ENCODE measurements at regions of chr22 and their contacts with region 1.

Region 1: DNA sequence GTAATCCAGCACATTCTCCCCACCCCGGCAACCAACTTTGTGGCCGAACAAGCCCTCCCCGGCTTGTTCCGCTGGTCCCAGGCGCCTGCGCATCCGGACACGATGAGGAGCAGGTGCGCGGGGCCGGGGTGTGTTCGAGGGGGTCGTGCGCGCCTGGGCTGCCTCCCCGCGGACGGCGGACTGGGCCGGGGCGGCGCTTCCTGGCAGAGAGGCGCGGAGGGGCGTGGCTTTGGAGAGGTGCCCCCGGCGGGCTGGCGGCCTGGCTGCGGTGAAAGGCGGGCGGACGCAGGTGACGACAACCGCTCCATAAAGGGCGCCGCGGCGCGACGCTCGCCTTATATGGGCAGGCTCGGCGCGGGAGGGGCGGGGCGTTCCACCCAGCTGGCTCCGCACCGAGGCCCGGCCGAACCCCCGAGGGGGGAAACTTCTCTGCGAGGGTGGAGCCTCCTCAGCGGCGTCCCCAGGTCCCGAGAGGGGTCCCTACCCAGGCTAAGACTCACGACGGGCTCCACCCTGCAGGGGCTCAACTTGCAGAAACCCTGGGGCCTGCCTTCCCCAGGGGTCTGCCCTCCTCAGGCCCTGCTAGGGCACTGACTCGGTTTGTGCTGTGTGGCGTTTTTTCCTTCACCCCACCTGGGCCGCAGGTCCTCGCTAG is 26.4 kb downstream of the TXN2 start:
- DNase-seq: peak; percentile 89 to 95 (median 92)
- ATAC-seq: peak; percentile 71 to 74
- H3K4me3 Mint-ChIP-seq: peak overlapping the region; percentile 72 to 87 (median 79)
- H3K27ac Mint-ChIP-seq: peak overlapping the region; percentile 75 to 98 (median 94)
- H3K4me1 Mint-ChIP-seq: peaks cover 15 to 54% (median 48%) of the 10 kb centered on the region in 4 donors
- H3K27me3 Mint-ChIP-seq: no peaks in the 10 kb centered on the region

Region 2: DNA sequence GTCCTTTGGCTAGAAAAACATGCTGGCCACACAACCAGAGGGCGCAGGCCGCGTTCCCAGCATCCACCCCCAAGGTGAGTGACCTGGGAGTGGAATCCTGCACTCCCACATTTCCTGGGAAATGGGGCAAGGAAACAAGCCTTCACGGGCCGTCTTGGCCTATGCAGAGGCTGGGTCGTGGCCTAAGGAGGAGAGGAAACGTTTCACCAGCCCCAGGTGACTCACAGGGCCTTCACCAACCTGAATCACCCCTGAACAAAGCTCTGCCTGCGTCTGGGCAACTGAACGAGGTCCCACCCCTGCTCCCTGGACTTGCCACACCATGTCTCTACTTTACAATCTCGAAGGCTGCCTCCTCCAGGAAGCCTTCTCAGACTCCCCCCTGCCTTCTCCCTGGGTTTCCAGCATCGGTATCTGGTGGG is 80.4 kb before region 1 on chr22:
- POLR2A ChIA-PET with region 1: interaction called, 14 read pairs
- DNase-seq: peak in 2 of 10 donors; percentile 9 to 49
- ATAC-seq: no peak
- H3K4me3 Mint-ChIP-seq: peak overlapping the region; percentile 48 to 96 (median 77)
- H3K27ac Mint-ChIP-seq: peak overlapping the region; percentile 90 to 99 (median 96)
- H3K4me1 Mint-ChIP-seq: peaks cover 44 to 97% (median 93%) of the 10 kb centered on the region in 4 donors
- H3K27me3 Mint-ChIP-seq: no peaks in the 10 kb centered on the region

Region 3: DNA sequence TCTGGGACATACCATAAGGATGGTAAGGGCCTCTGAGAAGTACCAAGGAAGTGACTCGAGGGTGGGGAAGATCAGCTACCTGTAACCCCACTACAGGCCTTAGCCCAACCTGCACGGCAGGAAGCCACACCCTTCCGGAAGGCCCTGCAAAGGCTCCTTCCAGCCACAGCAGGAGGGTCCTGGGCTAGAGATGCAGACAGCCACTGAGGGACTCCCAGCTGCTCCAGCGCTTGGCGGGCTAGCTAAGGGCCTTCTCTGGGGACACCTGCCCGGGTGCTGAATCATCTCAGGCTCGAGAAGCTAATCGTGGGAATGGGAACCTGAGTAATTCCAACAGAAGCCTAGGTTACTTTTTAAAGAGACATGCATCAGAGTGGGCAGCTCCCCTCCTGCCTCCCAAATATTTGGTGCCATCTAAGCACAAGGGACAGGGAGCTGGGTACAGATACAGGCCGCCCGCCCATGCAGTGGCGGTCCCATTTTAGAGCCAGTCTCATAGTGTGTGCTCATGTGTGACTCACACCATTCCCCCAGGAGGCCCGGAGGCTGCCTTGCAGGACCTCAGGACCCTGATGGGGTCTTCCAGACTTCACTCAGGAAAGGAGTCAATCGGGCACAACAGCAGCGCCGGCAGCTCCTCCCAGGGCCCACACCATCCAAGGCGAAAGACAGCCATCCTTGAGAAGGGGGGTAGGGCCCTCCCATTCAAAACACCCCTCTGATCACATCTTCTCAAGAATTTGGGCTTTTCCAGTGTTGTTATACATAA is 75.3 kb before region 1 on chr22:
- POLR2A ChIA-PET with region 1: interaction called, 20 read pairs
- DNase-seq: peak in 9 of 10 donors; percentile 44 to 83 (median 58)
- ATAC-seq: peak; percentile 50
- H3K4me3 Mint-ChIP-seq: peak overlapping the region; percentile 74 to 96 (median 84)
- H3K27ac Mint-ChIP-seq: peak overlapping the region; percentile 90 to 99 (median 99)
- H3K4me1 Mint-ChIP-seq: peaks cover 29 to 96% (median 88%) of the 10 kb centered on the region in 4 donors
- H3K27me3 Mint-ChIP-seq: no peaks in the 10 kb centered on the region

Region 4: DNA sequence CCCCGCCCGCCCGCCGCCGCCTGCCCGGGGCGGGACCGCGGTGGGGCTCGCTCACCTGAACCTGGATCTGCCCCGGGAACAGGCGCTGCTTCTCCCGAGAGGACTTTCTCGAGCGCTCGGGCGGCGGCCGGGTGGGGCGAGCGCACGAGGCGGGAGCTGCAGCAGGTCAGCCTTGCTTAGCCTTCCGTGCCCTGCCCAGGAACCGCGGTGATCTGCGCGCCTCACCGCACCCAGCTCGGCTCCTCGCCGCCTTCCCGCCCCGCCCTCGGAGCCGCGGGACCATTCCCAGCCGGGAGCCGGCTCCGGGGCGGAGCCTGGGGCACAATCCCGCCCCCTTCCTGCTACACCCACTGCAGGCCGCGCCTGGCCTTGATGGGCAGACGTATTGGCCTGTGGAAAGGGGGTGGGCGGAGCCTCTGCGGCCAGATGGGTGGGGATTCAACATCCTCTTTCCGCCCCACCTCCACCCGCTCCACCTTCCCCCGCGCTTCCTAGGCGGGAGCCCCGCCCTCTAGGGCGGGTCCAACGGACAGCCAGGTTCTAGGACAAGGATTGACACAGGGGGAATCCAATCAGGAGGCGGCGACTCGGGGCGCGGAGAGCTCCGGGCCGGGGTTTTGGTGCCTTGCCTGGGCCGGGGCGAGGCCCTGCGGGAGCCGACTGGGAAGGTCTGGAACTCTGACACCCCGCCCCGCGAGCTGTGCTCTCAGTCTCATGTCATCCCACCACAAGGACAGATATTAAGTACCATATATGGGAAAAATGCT is 67.1 kb before region 1 on chr22 and contains the start of gene MYH9:
- POLR2A ChIA-PET with region 1: interaction called, 20 read pairs
- DNase-seq: peak; percentile 96 to 99 (median 98)
- ATAC-seq: peak; percentile 71 to 81
- H3K4me3 Mint-ChIP-seq: peak within 1 kb of the TSS; percentile 87 to 98 (median 92)
- H3K27ac Mint-ChIP-seq: peak within 1 kb of the TSS; percentile 78 to 99 (median 96)
- H3K4me1 Mint-ChIP-seq: peaks cover 20 to 56% (median 38%) of the 10 kb centered on the region in 4 donors
- H3K27me3 Mint-ChIP-seq: no peaks in the 10 kb centered on the region
- polyA plus RNA-seq, gene MYH9: 51.2 to 389 (median 105) TPM

Region 5: DNA sequence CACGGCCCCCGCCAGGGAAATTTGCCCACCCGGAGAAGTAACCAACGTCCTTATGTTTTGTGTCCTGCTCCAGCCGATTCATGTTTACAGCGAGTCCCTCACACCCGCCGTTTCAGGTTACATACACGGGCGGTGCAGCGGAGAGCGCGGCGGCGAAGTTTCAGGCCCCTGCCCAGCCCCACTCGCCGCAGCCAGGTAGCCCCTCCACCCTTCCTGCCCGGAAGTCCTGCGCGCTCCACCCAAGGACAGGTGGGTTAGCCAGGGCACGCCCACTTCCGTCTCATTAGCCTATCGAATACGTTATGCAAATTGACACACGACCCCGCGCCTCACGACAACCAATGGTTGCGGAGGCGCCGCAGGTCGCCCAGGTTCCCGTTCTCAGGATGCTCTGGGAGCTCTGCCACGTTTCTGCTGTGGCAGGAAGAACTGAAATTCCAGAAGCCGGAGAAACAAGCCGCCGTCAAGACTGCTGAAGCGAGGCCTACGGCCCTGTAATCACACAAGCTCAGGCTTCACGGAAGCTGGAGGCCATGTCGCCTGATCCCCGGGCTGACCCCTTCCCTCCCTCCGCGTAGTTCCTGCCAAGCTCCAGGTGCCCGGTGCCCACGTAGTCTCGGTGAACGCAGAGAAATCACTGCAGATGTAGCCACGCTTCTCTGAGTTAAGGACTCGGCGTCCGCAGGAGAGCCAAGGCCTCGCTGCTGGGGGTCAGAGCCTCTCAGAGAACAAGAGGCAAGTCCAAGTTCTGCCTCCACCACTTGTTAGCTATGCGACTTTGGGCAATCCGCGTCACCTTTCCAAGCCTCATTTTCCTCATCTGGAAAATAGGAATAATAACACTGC is 44.9 kb before region 1 on chr22:
- POLR2A ChIA-PET with region 1: interaction called, 13 read pairs
- DNase-seq: peak; percentile 43 to 90 (median 68)
- ATAC-seq: peak; percentile 72 to 76
- H3K4me3 Mint-ChIP-seq: peak overlapping the region; percentile 64 to 86 (median 80)
- H3K27ac Mint-ChIP-seq: peak overlapping the region; percentile 75 to 94 (median 87)
- H3K4me1 Mint-ChIP-seq: peaks cover 20 to 66% (median 55%) of the 10 kb centered on the region in 4 donors
- H3K27me3 Mint-ChIP-seq: no peaks in the 10 kb centered on the region

Region 6: GRCh38 chr22:36435516-36436415 is 19.3 kb before region 1 on chr22:
- POLR2A ChIA-PET with region 1: interaction called, 10 read pairs
- DNase-seq: peak; percentile 51 to 87 (median 83)
- ATAC-seq: peak; percentile 90 to 91
- H3K4me3 Mint-ChIP-seq: peak overlapping the region; percentile 27 to 80 (median 64)
- H3K27ac Mint-ChIP-seq: peak overlapping the region; percentile 84 to 96 (median 92)
- H3K4me1 Mint-ChIP-seq: peaks cover 12 to 48% (median 36%) of the 10 kb centered on the region in 4 donors
- H3K27me3 Mint-ChIP-seq: no peaks in the 10 kb centered on the region

Region 7: GRCh38 chr22:36481393-36482168 is 26.5 kb after region 1 on chr22 and contains the start of gene TXN2:
- POLR2A ChIA-PET with region 1: interaction called, 10 read pairs
- DNase-seq: peak; percentile 91 to 99 (median 98)
- ATAC-seq: peak; percentile 89
- H3K4me3 Mint-ChIP-seq: peak within 1 kb of the TSS; percentile 91 to 98 (median 96)
- H3K27ac Mint-ChIP-seq: peak within 1 kb of the TSS; percentile 90 to 99 (median 97)
- H3K4me1 Mint-ChIP-seq: peaks cover 17 to 33% (median 21%) of the 10 kb centered on the region in 4 donors
- H3K27me3 Mint-ChIP-seq: no peaks in the 10 kb centered on the region
- polyA plus RNA-seq, gene TXN2: 145 to 158 (median 157) TPM

Region 8: DNA sequence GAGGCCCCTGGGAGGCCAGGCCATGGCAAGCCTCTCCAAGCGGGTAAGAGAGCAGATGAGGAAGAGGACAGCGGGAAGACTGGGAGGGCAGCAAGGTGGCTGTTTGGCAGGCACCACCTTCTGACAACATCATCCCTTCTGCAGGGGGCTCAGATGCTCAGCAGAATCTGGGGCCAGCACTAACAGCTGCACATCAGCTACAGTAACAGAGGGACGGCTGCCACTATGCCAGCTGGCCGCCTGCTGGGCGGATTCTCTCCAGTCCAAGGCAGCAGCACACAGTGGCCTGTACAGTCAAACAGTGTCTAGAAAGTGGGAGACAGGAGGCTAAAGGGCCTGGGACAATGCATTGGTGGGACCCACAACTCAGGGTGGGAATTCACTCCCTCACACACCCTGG is 37.1 kb after region 1 on chr22:
- POLR2A ChIA-PET with region 1: no interaction called
- DNase-seq: no peak
- ATAC-seq: no peak
- H3K4me3 Mint-ChIP-seq: no peak overlapping the region
- H3K27ac Mint-ChIP-seq: peak overlapping the region in 1 of 10 donors; percentile 69
- H3K4me1 Mint-ChIP-seq: peaks cover 0 to 17% (median 6%) of the 10 kb centered on the region in 4 donors
- H3K27me3 Mint-ChIP-seq: no peaks in the 10 kb centered on the region